Psoas muscle (tissue), 8 donors: ENCODE measurements at regions of chr15 and their contacts with region 1.

Region 1: DNA sequence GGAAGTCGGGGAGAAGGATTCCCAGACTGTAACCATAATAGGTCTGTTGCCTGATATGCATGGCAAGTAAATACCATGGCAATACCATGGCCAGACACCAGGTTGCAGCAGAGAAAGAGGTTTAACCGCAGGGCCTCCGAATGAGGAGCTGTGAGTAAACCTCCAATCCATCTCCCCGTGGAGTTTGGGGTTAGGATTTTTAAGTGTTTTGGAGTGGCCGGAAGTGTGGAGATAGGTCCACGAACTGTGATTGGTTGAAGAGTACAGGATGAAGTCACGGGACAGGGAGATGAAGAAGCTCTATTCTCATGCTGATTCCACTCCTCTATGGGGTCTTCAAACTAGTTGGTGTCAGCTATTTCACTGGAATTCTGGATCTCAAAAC is 127.9 kb downstream of the ST8SIA2 start:
- DNase-seq: peak; percentile 67 to 78
- ATAC-seq: peak; percentile 90 to 98 (median 95)
- H3K4me3 ChIP-seq: no peak overlapping the region
- H3K27ac ChIP-seq: no peak overlapping the region
- H3K4me1 ChIP-seq: peaks cover 20% of the 10 kb centered on the region
- H3K27me3 ChIP-seq: no peaks in the 10 kb centered on the region
- CTCF ChIP-seq: peak; percentile 87

Region 2: GRCh38 chr15:92158434-92158833 is 363.2 kb before region 1 on chr15:
- intact Hi-C with region 1: no loop called
- DNase-seq: no peak
- ATAC-seq: no peak
- H3K4me3 ChIP-seq: no peak overlapping the region
- H3K27ac ChIP-seq: no peak overlapping the region
- H3K4me1 ChIP-seq: no peaks in the 10 kb centered on the region
- H3K27me3 ChIP-seq: no peaks in the 10 kb centered on the region
- CTCF ChIP-seq: no peak

Region 3: DNA sequence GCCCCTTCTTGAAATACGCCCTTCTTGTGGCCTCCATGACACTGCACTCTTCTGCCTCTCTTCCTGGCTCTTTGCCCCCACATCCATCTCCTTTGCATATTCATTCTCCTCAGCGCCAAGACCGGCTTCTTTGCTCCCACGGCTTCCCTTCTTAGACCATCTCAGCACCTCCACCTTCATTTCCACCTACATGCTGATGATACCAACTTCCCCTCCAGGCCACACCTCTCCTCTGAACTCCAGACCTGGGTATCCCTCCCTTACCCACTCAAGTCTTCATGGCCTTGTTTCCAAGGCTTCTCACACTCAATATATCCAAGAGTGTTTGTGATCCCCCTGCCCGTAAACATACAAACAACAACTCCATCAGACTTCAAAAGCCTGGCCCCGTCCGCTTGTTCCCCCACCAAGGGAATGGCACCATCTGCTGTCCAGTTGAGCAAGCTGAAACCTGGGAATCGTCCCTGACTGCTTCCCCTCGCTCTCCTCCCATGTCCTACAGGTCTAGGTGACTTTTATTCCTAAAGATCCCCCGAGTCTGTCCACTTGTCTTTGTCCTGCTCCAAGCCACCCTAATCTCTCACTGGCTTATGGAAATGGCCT is 161.7 kb after region 1 on chr15:
- intact Hi-C with region 1: loop called (anchors 2 kb)
- DNase-seq: peak; percentile 36 to 67
- ATAC-seq: peak; percentile 75 to 91 (median 85)
- H3K4me3 ChIP-seq: no peak overlapping the region
- H3K27ac ChIP-seq: no peak overlapping the region
- H3K4me1 ChIP-seq: no peaks in the 10 kb centered on the region
- H3K27me3 ChIP-seq: no peaks in the 10 kb centered on the region
- CTCF ChIP-seq: peak; percentile 63